Motor neuron (in vitro differentiated cells): ENCODE measurements at regions of chr14 and their contacts with region 1.

Region 1: GRCh38 chr14:24241829-24242443 is 487 bp downstream of the TINF2 start:
- ATAC-seq: peak; percentile 69 to 88 (median 81)
- H3K4me3 ChIP-seq: peak overlapping the region; percentile 50 to 82 (median 66)
- H3K27ac ChIP-seq: peak overlapping the region; percentile 94 to 97
- H3K4me1 ChIP-seq: peaks cover 12 to 27% of the 10 kb centered on the region in 2 donors

Region 2: GRCh38 chr14:24141097-24141880 is 100.6 kb before region 1 on chr14 and contains the start of gene EMC9:
- in situ Hi-C with region 1: no loop called
- ATAC-seq: peak; percentile 85 to 92 (median 90)
- H3K4me3 ChIP-seq: peak within 1 kb of the TSS; percentile 60 to 77 (median 74)
- H3K27ac ChIP-seq: peak within 1 kb of the TSS; percentile 58 to 81
- H3K4me1 ChIP-seq: peaks cover 10 to 12% of the 10 kb centered on the region in 2 donors
- total RNA-seq, gene EMC9: 16.7 to 41.2 (median 26.0) TPM

Region 3: DNA sequence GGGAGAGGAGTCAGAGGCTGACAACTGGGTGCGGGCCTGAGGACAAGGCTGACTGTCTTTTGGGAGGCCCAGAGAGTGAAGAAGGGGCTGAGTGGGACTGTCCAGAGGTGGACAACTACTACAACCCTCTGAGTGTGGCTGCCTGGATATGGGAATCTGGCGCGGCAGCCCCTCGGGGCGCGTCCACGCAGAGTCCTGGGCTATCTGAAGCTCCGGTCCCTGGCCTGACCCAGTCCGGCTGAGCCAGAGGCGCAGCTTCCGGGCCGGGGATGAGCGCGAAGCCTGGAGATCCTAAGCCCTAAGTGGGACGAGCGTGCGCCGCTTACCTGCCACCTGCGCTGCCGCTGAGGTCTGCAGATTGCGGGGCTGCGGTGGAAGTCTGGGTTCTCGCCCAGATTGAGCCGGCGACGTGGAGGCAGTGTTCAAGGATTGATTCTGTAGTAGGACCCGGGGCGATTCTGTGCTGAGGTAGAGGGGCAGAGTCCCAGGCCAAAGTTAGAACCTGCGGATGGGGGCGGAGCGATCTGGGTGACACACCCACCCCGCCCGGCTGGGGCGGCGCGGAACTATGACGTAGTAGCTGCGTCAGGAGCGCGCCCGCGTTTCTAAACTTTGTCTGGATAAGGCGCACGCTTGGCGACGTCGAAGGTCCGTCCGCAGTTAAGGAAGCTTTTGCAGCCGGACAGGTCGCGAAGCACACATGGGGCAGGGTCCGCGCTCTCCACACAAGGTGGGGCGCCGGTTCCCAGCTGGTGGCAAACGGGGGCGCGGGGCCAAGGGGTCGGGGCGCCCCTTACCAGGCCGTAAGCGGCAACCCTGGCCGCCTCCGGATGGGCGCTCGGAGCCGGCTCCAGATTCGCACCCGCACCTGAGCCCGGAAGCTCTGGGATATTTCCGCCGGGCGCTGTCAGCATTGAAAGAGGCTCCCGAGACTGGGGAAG is 57.6 kb after region 1 on chr14 and contains the starts of genes DHRS1 and NOP9:
- in situ Hi-C with region 1: loop called in 1 of 9 experiments (anchors 10 kb)
- ATAC-seq: peak; percentile 70 to 86 (median 79)
- H3K4me3 ChIP-seq: peak within 1 kb of the TSS; percentile 67 to 95 (median 76)
- H3K27ac ChIP-seq: peak within 1 kb of the TSS; percentile 31 to 65
- H3K4me1 ChIP-seq: peaks cover 6 to 10% of the 10 kb centered on the region in 2 donors
- total RNA-seq, gene DHRS1: 11.4 to 26.5 (median 16.4) TPM
- total RNA-seq, gene NOP9: 13.5 to 32.8 (median 16.6) TPM

Region 4: DNA sequence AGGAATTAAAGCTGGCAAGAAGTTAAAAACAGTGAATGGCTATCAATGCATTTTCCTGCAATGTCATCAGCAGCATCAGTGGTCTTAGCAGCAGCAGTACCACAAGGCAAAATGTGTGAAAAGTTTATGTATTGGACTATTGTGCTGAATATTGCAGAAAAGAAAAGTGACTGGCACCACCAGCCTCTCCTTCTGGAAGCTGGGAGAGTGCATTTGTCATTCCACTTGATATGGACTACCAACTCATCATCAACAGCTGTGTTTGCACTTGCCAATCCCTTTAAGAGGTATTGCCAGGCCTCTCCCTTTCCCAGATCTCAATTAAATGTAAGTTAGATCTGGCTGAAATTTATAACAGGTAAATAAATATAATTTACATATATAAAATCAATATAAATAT is 543.0 kb after region 1 on chr14:
- in situ Hi-C with region 1: no loop called
- ATAC-seq: no peak
- H3K4me3 ChIP-seq: no peak overlapping the region
- H3K27ac ChIP-seq: no peak overlapping the region
- H3K4me1 ChIP-seq: peaks cover 0 to 8% of the 10 kb centered on the region in 2 donors